ENCODE measurements at regions of chr11 and their contacts with region 1.

Region 1: DNA sequence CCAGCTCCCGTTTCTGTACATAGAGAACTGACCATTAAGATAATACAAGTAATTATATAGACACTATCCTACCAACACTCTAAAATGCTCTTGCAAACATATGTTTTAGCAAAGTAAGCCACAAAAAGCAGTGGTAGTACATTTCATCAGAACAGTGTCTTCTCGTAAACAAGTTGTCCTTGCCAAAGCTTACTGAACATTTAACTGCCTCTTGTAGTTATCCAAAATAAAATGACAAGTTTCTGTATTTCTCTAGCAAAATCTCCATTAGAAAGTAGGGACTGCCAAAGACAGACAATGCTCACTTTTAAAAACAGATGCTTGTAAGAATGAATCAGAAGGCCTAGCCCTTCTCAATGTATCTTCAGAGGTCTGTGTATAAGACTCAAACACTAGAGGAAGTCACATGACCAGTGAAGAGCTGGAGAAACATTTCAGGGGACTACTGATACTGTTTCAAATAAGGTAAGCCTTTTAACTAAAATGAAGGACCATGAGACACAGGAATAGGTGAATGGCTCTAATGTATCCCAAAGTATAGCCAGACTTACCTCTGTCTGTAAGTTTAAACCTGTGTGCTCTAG is 7.8 kb upstream of the ZC3H12C start:
- DNase-seq: no peak
- ATAC-seq: no peak
- H3K4me3 ChIP-seq: no peak overlapping the region
- H3K27ac ChIP-seq: no peak overlapping the region
- H3K4me1 ChIP-seq: no peaks in the 10 kb centered on the region
- H3K27me3 ChIP-seq: peaks cover 1 to 13% of the 10 kb centered on the region in 2 experiments; a peak in 2 of 5 replicates
- CTCF ChIP-seq: no peak
- EP300 ChIP-seq: no peak
- POLR2A ChIP-seq: no peak
- RAD21 ChIP-seq: no peak

Region 2: GRCh38 chr11:109902764-109903433 is 182.4 kb before region 1 on chr11:
- CTCF ChIA-PET with region 1: no interaction called
- POLR2A ChIA-PET with region 1: no interaction called
- in situ Hi-C with region 1: no loop called
- intact Hi-C with region 1: no loop called
- DNase-seq: no peak
- ATAC-seq: no peak
- H3K4me3 ChIP-seq: no peak overlapping the region
- H3K27ac ChIP-seq: no peak overlapping the region
- H3K4me1 ChIP-seq: no peaks in the 10 kb centered on the region
- H3K27me3 ChIP-seq: no peaks in the 10 kb centered on the region
- CTCF ChIP-seq: no peak
- EP300 ChIP-seq: no peak
- POLR2A ChIP-seq: no peak
- RAD21 ChIP-seq: no peak

Region 3: GRCh38 chr11:110059706-110060463 is 25.5 kb before region 1 on chr11:
- CTCF ChIA-PET with region 1: no interaction called
- POLR2A ChIA-PET with region 1: no interaction called
- in situ Hi-C with region 1: no loop called
- intact Hi-C with region 1: loop called (anchors 2 kb)
- DNase-seq: no peak
- ATAC-seq: no peak
- H3K4me3 ChIP-seq: no peak overlapping the region
- H3K27ac ChIP-seq: no peak overlapping the region
- H3K4me1 ChIP-seq: no peaks in the 10 kb centered on the region
- H3K27me3 ChIP-seq: 0 out of 5 replicates have a peak, but pooled peaks cover 0 to 3% of the 10 kb centered on the region in 2 experiments
- CTCF ChIP-seq: no peak
- EP300 ChIP-seq: no peak
- POLR2A ChIP-seq: no peak
- RAD21 ChIP-seq: no peak

Region 4: DNA sequence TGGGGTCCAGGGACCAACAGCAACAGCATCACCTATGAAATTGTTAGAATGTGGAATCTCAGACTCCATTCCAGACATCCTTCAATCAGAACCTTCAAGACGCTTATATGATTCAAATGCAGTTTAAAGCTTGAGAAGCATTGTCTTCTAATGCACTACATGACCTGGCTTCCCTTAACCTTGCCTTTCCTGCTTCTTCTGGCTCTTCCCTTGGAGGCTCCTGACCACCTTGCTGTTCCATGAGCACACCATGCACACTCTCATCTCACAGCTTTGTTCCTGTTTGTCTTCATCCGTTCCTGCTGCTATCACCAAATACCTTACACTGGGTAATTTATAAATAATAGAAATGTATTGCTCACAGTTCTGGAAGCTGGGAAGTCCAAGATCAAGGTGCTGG is 34.0 kb after region 1 on chr11:
- CTCF ChIA-PET with region 1: no interaction called
- POLR2A ChIA-PET with region 1: no interaction called
- in situ Hi-C with region 1: no loop called
- intact Hi-C with region 1: no loop called
- DNase-seq: no peak
- ATAC-seq: no peak
- H3K4me3 ChIP-seq: no peak overlapping the region
- H3K27ac ChIP-seq: no peak overlapping the region
- H3K4me1 ChIP-seq: no peaks in the 10 kb centered on the region
- H3K27me3 ChIP-seq: no peaks in the 10 kb centered on the region; a peak in 1 of 5 replicates
- CTCF ChIP-seq: no peak
- EP300 ChIP-seq: no peak
- POLR2A ChIP-seq: no peak
- RAD21 ChIP-seq: no peak

Measured in HepG2 (cell line).